MCF 10A (cell line): ENCODE measurements at regions of chr14 and their contacts with region 1.

Region 1: DNA sequence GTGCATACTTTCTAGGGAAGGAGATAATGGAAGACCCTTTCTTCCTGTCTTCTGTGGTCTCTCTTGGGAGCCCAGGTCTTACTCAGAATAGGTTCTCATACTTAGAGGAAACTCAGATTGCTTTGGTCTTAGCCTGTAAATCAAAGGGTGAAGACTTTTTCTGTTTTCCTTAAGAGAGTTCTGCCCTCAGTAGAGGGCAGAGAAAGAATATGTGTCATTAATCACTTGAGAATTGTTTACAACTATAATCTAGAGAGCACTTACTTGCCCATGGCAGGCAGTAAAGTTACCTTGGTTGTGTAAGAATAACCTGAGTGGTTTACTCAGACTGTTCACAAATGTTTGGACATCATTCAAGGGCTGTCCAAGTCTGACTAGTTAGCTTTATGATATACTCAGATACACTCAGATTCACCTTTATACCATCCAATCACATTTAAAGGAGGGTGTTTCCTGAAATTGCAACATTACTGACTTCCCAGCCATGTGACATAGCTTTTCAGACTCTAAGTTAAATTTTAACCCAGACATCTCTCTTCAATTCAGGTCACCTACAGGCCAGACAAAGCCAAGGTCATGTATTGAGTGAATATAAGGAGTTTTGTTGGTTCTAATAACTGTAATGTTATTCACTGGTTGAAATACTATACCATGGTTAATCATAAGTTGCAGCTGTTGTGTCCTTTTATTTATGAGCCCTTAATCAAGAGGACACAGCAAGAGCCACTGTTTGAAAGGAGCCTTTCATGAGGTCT is 372.2 kb downstream of the RAD51B start:
- DNase-seq: peak; percentile 68
- H3K4me3 Mint-ChIP-seq: no peak overlapping the region
- H3K27ac Mint-ChIP-seq: peak overlapping the region; percentile 27
- H3K4me1 Mint-ChIP-seq: peaks cover 8% of the 10 kb centered on the region
- H3K27me3 Mint-ChIP-seq: no peaks in the 10 kb centered on the region
- CTCF ChIP-seq: no peak

Region 2: DNA sequence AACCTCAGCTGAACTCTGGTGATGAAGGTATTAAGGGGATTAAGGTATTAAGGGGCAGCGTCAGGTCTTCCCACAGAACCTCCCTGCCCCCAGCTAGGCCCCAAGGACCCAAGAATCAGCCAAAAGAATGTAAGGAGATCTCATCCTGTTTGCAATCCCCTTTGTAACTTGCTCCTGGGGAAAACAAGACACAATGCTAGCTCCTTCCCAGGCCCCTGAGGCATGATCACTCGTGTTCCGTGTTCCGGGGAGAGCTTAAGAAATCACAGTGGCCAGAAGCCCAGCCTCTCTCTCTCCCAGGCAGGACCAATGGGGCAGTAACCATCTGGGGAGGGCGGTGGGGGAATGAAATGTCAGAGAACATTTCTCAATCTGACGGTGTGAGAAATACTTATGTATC is 624.8 kb before region 1 on chr14:
- CTCF ChIA-PET with region 1: no interaction called
- POLR2A ChIA-PET with region 1: no interaction called
- intact Hi-C with region 1: no loop called
- DNase-seq: peak; percentile 70
- H3K4me3 Mint-ChIP-seq: no peak overlapping the region
- H3K27ac Mint-ChIP-seq: no peak overlapping the region
- H3K4me1 Mint-ChIP-seq: peaks cover 18% of the 10 kb centered on the region
- H3K27me3 Mint-ChIP-seq: no peaks in the 10 kb centered on the region
- CTCF ChIP-seq: no peak

Region 3: GRCh38 chr14:68157971-68158371 is 33.8 kb before region 1 on chr14:
- CTCF ChIA-PET with region 1: no interaction called
- POLR2A ChIA-PET with region 1: interaction called, 19 read pairs
- intact Hi-C with region 1: no loop called
- DNase-seq: peak; percentile 60
- H3K4me3 Mint-ChIP-seq: peak overlapping the region; percentile 30
- H3K27ac Mint-ChIP-seq: peak overlapping the region; percentile 96
- H3K4me1 Mint-ChIP-seq: peaks cover 18% of the 10 kb centered on the region
- H3K27me3 Mint-ChIP-seq: no peaks in the 10 kb centered on the region
- CTCF ChIP-seq: no peak

Region 4: DNA sequence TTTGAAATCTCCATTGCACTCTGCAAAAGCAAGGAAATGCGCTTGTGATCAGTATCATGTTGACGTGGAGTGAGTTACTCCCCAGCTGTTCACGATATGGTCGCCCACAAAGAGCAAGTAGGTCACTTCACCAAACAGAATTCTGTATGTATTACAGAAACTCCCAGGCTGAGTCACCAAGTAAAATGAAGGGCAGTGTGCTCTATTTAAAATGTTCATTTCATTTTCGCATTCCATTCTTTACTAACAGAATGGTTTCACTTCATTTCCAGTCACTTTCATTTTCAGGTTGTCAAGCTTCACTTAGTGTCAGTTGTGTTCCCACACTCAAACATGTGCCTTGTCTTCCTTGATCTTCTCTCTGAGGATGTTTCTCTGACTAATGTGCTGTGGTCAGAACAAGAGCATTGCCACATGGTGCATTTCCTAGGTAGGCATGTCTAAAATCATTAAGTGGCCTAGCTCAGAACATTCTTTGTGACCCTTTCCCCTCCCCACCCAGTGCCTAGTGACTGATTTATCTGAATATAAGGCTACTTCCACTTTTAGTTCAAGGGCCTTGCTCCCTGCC is 19.1 kb after region 1 on chr14:
- CTCF ChIA-PET with region 1: no interaction called
- POLR2A ChIA-PET with region 1: interaction called, 11 read pairs
- intact Hi-C with region 1: no loop called
- DNase-seq: peak; percentile 79
- H3K4me3 Mint-ChIP-seq: peak overlapping the region; percentile 56
- H3K27ac Mint-ChIP-seq: peak overlapping the region; percentile 87
- H3K4me1 Mint-ChIP-seq: peaks cover 13% of the 10 kb centered on the region
- H3K27me3 Mint-ChIP-seq: no peaks in the 10 kb centered on the region
- CTCF ChIP-seq: no peak

Region 5: GRCh38 chr14:68232300-68233055 is 40.7 kb after region 1 on chr14:
- CTCF ChIA-PET with region 1: no interaction called
- POLR2A ChIA-PET with region 1: interaction called, 11 read pairs
- intact Hi-C with region 1: no loop called
- DNase-seq: peak; percentile 99
- H3K4me3 Mint-ChIP-seq: no peak overlapping the region
- H3K27ac Mint-ChIP-seq: no peak overlapping the region
- H3K4me1 Mint-ChIP-seq: no peaks in the 10 kb centered on the region
- H3K27me3 Mint-ChIP-seq: no peaks in the 10 kb centered on the region
- CTCF ChIP-seq: no peak

Region 6: DNA sequence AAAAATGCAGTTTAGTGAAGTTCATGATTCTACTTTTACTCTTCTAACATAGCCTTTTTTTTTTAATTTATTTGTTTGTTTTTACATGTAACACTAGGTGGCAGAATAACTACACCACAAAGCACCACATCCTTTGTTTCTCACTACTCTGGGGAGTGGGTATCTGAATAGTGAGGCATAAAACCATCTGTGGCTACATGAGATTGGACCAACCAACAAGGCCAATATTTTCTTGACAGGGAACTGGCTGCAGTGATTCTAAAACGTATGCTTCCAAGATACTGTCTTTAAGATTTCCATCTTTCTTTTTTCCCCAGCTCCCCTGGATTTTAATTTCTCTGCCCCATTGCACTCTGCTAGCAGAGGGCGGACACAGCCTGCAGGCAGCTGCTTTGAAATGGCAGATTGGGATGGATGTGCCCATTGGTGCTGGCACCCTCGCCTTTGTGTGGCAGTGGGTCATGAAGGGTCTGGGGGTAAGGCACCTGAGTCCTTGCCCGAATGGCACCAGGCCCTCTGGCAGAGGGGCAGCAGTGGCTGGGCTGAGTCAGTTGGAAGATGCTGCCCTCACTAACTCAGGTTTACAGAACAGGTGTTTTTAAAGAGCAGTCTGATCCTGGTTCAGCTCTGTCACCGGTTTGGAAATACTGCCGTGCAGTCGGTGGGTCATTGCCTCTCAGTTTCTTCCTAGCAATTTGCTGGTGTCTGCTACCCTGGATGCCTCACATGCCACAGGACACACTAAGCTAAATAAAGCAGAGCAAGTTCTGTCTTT is 56.9 kb after region 1 on chr14:
- CTCF ChIA-PET with region 1: no interaction called
- POLR2A ChIA-PET with region 1: no interaction called
- intact Hi-C with region 1: no loop called
- DNase-seq: peak; percentile 60
- H3K4me3 Mint-ChIP-seq: peak overlapping the region; percentile 21
- H3K27ac Mint-ChIP-seq: peak overlapping the region; percentile 80
- H3K4me1 Mint-ChIP-seq: peaks cover 57% of the 10 kb centered on the region
- H3K27me3 Mint-ChIP-seq: no peaks in the 10 kb centered on the region
- CTCF ChIP-seq: peak; percentile 67